Astrocyte of the cerebellum (primary cell): ENCODE measurements at regions of chr17 and their contacts with region 1.

Region 1: DNA sequence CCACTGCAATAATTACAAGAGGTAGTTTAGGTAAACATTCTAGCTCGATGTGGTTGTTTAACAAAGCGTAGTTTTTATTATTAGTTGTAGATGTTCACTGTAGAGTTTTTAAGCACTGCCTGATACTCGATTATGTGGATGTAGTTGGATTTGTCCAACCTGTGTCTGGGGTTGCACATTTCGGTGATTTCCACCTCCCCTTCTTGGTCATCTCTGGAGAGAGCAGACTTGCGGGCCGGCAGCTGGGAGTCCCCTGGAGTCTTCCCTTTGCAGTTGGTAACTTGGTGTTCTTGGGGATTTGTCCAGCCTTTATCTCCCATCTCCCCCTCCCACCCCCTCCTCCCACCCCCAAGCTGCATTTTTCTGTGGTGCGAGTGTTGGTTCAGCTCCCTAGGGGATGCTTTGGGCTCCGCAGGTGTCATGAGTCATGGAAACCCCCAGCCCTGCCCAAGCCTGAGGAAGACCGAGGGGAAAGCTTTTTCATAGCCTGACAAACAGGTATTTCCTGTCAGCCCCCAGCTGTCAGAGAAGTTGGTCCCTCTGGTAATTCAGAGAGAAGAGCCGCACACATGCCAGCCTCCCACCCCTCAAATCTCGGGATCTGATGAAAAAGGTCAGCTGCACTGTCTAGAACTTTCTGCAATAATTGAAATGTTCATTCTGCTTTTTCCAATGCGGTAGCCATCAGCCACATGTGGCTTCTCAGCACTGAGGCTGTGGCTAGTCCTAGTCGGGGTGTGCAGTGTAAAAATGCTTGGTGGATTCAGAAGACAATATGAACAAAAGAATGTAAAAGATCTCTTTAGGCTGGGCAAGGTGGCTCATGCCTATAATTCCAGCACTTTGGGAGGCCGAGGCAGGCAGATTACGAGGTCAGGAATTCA is 50.3 kb downstream of the KSR1 start:
- DNase-seq: peak; percentile 46
- H3K4me3 ChIP-seq: no peak overlapping the region
- CTCF ChIP-seq: no peak

Region 2: GRCh38 chr17:27544350-27545131 is 38.0 kb after region 1 on chr17:
- in situ Hi-C with region 1: loop called (anchors 5 kb)
- DNase-seq: peak; percentile 91
- H3K4me3 ChIP-seq: no peak overlapping the region
- CTCF ChIP-seq: peak; percentile 11